Activated B cell treated with CpG ODN at 0.5 μM for 24 hours (primary cell): ENCODE measurements at regions of chr9 and their contacts with region 1.

Region 1: GRCh38 chr9:21110708-21111576 is 30.7 kb downstream of the IFNW1 start:
- DNase-seq: no peak
- ATAC-seq: peak; percentile 71
- H3K4me3 Mint-ChIP-seq: no peak overlapping the region
- H3K27ac Mint-ChIP-seq: no peak overlapping the region
- H3K4me1 Mint-ChIP-seq: no peaks in the 10 kb centered on the region
- H3K27me3 Mint-ChIP-seq: peaks cover 5% of the 10 kb centered on the region
- CTCF ChIP-seq: no peak

Region 2: DNA sequence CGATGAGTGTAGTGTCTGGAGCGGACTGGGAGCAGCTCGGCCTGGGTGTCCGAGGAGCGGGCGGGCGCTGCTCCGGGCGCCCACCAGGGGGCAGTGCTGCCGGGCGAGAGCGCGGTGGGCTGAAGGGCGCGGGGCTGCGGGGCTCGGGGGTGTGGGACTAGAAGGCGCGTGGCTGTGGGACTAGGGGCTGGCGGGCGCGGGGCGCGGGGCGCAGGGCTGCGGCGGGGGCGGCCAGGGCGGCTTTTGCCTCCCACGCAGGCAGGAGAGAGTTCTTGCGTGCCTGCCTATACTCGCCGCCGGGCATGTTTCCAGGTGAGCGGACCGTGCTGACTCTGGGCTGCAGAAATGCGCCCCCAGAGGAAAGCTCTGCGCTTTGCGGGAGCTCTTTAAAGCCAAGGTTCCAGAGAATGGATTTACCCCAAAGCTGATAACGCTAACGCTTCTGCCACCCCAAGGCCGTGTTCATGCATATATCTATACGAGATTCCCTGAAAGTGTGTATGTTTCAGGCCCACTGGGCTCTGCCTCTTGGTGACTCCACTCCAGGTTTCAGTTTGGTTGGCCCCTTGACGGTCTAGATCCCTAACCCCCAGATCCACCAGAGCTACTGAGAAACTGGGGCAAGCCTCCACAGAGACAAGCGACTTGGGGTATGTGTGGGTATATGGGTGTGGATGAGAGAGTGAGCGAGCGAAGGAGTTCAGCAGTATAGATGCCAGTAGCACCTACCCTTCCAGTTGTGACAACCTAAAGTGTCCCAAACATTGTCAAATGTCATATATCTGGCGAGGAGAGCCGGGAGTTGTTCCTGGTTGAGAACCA is 1646.0 kb before region 1 on chr9:
- CTCF ChIA-PET with region 1: interaction called, 7 read pairs
- POLR2A ChIA-PET with region 1: no interaction called
- intact Hi-C with region 1: loop called (anchors 1 kb)
- DNase-seq: peak; percentile 77
- ATAC-seq: peak; percentile 93
- H3K4me3 Mint-ChIP-seq: peak overlapping the region; percentile 88
- H3K27ac Mint-ChIP-seq: peak overlapping the region; percentile 69
- H3K4me1 Mint-ChIP-seq: peaks cover 11% of the 10 kb centered on the region
- H3K27me3 Mint-ChIP-seq: no peaks in the 10 kb centered on the region
- CTCF ChIP-seq: peak; percentile 60

Region 3: GRCh38 chr9:19493174-19493811 is 1617.6 kb before region 1 on chr9:
- CTCF ChIA-PET with region 1: interaction called, 3 read pairs
- POLR2A ChIA-PET with region 1: no interaction called
- intact Hi-C with region 1: loop called (anchors 1 kb)
- DNase-seq: no peak
- ATAC-seq: peak; percentile 49
- H3K4me3 Mint-ChIP-seq: peak overlapping the region; percentile 16
- H3K27ac Mint-ChIP-seq: no peak overlapping the region
- H3K4me1 Mint-ChIP-seq: peaks cover 8% of the 10 kb centered on the region
- H3K27me3 Mint-ChIP-seq: peaks cover 10% of the 10 kb centered on the region
- CTCF ChIP-seq: no peak

Region 4: GRCh38 chr9:19513671-19514275 is 1597.2 kb before region 1 on chr9:
- CTCF ChIA-PET with region 1: no interaction called
- POLR2A ChIA-PET with region 1: no interaction called
- intact Hi-C with region 1: no loop called
- DNase-seq: no peak
- ATAC-seq: no peak
- H3K4me3 Mint-ChIP-seq: no peak overlapping the region
- H3K27ac Mint-ChIP-seq: no peak overlapping the region
- H3K4me1 Mint-ChIP-seq: no peaks in the 10 kb centered on the region
- H3K27me3 Mint-ChIP-seq: no peaks in the 10 kb centered on the region
- CTCF ChIP-seq: no peak

Region 5: DNA sequence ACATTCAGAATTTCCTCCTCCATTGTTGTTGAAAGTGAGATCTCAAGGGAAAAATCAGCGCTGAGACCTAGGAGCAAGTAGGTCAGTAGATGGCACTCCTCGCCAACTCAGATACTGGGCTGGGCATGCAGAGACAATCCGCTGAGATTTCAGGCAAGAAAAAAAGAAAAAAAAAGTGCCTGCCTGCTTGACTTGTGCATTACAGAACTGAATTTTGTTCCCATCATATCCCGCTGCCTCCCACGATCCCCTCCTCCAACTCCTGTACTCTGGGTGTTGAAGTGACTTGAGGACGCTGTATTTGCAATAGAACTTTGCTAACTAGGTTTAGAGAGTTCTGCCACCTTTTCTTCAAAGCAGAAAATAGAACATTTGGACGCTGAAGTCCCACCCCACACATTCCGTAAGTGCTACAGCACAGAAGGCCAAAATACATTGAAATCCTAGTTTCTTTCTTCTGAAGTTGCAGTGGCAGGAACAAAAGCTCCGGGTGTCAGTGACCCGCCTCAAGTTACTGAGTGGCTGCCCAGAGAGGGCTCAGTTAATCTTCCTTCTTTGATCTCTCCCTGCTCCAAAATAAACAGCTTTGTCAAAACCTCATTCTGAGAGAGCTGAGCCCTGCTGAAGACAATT is 754.4 kb before region 1 on chr9:
- CTCF ChIA-PET with region 1: no interaction called
- POLR2A ChIA-PET with region 1: no interaction called
- intact Hi-C with region 1: loop called (anchors 1 kb)
- DNase-seq: no peak
- ATAC-seq: no peak
- H3K4me3 Mint-ChIP-seq: no peak overlapping the region
- H3K27ac Mint-ChIP-seq: no peak overlapping the region
- H3K4me1 Mint-ChIP-seq: no peaks in the 10 kb centered on the region
- H3K27me3 Mint-ChIP-seq: peaks cover 2% of the 10 kb centered on the region
- CTCF ChIP-seq: no peak

Region 6: DNA sequence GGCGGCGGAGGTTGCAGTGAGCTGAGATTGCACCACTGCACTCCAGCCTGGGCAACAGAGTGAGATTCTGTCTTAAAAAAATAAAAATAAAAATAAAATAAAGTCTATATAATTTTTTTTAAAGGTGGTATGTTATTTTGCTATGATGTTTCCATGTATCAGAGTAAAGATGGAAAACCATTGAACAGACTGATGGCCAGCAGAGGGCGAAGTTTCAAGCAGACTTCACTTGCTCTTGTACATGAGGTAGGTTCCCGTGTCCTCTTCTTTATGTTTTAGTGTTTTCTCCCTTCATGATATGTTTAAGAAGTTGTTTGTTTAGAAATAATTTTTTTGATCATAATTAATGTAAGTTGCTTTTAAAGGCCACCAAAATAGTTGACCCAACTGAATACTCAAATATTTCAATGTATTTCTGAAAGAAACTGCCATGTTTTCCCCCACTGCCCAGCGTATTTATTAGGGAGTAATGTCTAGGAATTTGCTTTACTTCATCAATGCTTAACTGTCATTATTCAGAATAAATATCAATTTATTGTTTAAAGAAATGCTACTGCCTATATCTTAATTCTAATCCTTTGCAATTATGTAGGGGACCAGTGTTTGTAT is 225.9 kb before region 1 on chr9:
- CTCF ChIA-PET with region 1: interaction called, 79 read pairs
- POLR2A ChIA-PET with region 1: no interaction called
- intact Hi-C with region 1: loop called (anchors 1 kb)
- DNase-seq: no peak
- ATAC-seq: no peak
- H3K4me3 Mint-ChIP-seq: no peak overlapping the region
- H3K27ac Mint-ChIP-seq: no peak overlapping the region
- H3K4me1 Mint-ChIP-seq: no peaks in the 10 kb centered on the region
- H3K27me3 Mint-ChIP-seq: no peaks in the 10 kb centered on the region
- CTCF ChIP-seq: no peak